ENCODE measurements at regions of chr1 and their contacts with region 1.

Region 1: GRCh38 chr1:16946646-16947045 is 24.9 kb downstream of the CROCC start:
- DNase-seq: no peak
- H3K4me3 ChIP-seq: no peak overlapping the region
- H3K27ac ChIP-seq: no peak overlapping the region
- H3K4me1 ChIP-seq: no peaks in the 10 kb centered on the region
- CTCF ChIP-seq: no peak

Region 2: GRCh38 chr1:16625497-16626408 is 320.9 kb before region 1 on chr1:
- CTCF ChIA-PET with region 1: interaction called, 4 read pairs
- POLR2A ChIA-PET with region 1: no interaction called
- intact Hi-C with region 1: loop called (anchors 2 kb)
- DNase-seq: no peak
- H3K4me3 ChIP-seq: no peak overlapping the region
- H3K27ac ChIP-seq: no peak overlapping the region
- H3K4me1 ChIP-seq: no peaks in the 10 kb centered on the region
- CTCF ChIP-seq: no peak

Region 3: GRCh38 chr1:17016317-17016661 is 69.6 kb after region 1 on chr1:
- CTCF ChIA-PET with region 1: no interaction called
- POLR2A ChIA-PET with region 1: no interaction called
- intact Hi-C with region 1: no loop called
- DNase-seq: no peak
- H3K4me3 ChIP-seq: no peak overlapping the region
- H3K27ac ChIP-seq: no peak overlapping the region
- H3K4me1 ChIP-seq: peaks cover 5% of the 10 kb centered on the region
- CTCF ChIP-seq: no peak

Region 4: DNA sequence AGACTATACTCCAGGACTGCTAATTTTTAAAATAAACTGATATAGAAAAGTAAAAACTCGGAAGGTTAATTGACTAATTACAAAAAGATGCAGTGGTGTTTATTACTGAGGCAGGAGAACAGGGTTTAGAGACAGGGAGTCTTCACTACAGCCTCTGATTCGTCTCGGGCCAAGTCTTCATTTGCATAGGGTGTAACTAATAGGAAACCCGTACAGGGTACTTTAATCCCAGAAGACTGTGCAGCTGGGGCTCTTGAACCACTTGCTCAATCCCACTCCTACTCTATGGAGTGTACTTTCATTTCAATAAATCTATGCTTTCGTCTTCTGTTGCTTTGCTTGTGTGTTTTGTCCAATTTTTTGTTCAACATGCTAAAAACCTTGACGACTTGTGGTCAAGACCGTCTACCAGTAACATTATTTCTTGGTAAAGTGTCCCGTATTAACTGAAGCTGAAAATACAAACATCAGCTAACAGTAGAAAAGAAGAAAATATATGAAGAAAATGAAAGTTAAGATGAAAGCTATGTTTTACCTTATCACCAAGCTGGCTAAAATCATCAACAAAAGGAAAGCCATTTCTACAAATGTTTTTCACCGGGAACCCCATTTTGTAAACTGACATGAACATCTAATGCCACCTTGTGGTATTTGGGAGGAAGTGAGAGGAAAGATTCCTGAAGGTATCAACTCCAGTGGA is 99.1 kb after region 1 on chr1:
- CTCF ChIA-PET with region 1: no interaction called
- POLR2A ChIA-PET with region 1: no interaction called
- intact Hi-C with region 1: loop called (anchors 2 kb)
- DNase-seq: peak; percentile 64
- H3K4me3 ChIP-seq: peak overlapping the region; percentile 10
- H3K27ac ChIP-seq: no peak overlapping the region
- H3K4me1 ChIP-seq: peaks cover 6% of the 10 kb centered on the region
- CTCF ChIP-seq: peak; percentile 90

Measured in OCI-LY7 (cell line).